Heart left ventricle (tissue), 16 donors: ENCODE measurements at regions of chr17 and their contacts with region 1.

Region 1: GRCh38 chr17:17966399-17966798 is 5.8 kb downstream of the TOM1L2 start:
- DNase-seq: no peak
- ATAC-seq: no peak
- H3K4me3 ChIP-seq: no peak overlapping the region
- H3K27ac ChIP-seq: no peak overlapping the region
- H3K4me1 ChIP-seq: peaks cover 6 to 70% (median 42%) of the 10 kb centered on the region in 12 donors
- H3K27me3 ChIP-seq: no peaks in the 10 kb centered on the region
- CTCF ChIP-seq: no peak
- POLR2A ChIP-seq: no peak

Region 2: DNA sequence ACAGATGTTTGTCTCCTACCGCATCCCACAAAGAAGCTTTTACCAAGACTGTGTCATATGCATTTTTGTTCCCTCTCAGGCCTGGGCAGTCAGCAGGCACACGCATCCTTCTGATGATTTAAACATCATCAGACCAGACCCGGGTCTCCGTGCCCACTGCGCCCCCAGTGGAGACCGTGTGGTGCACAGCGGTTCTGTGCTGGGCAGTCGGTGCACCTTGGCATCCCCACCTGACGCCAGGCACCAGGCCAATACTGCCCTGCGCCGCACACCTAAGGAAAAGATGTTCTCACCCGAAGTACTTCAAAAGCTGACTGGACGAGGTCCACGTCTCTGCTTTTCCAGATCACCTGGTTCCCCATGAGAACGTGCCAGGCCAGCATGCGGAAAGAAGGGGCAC is 749.6 kb before region 1 on chr17:
- intact Hi-C with region 1: no loop called
- DNase-seq: peak in 1 of 5 donors; percentile 11
- ATAC-seq: no peak
- H3K4me3 ChIP-seq: no peak overlapping the region
- H3K27ac ChIP-seq: no peak overlapping the region
- H3K4me1 ChIP-seq: peaks cover 0 to 2% (median 0%) of the 10 kb centered on the region in 12 donors
- H3K27me3 ChIP-seq: no peaks in the 10 kb centered on the region
- CTCF ChIP-seq: no peak
- POLR2A ChIP-seq: no peak

Region 3: GRCh38 chr17:17928398-17929287 is 37.8 kb before region 1 on chr17:
- intact Hi-C with region 1: loop called in 8 of 10 experiments (anchors 2 to 5 kb)
- DNase-seq: no peak
- ATAC-seq: peak; percentile 32 to 79 (median 50)
- H3K4me3 ChIP-seq: no peak overlapping the region
- H3K27ac ChIP-seq: peak overlapping the region in 11 of 12 donors; percentile 41 to 82 (median 69)
- H3K4me1 ChIP-seq: peaks cover 3 to 88% (median 42%) of the 10 kb centered on the region in 12 donors
- H3K27me3 ChIP-seq: no peaks in the 10 kb centered on the region
- CTCF ChIP-seq: no peak
- POLR2A ChIP-seq: no peak

Region 4: GRCh38 chr17:17933775-17934174 is 32.6 kb before region 1 on chr17:
- intact Hi-C with region 1: loop called in 3 of 10 experiments (anchors 5 kb)
- DNase-seq: no peak
- ATAC-seq: no peak
- H3K4me3 ChIP-seq: no peak overlapping the region
- H3K27ac ChIP-seq: peak overlapping the region in 2 of 12 donors; percentile 8 to 11
- H3K4me1 ChIP-seq: peaks cover 3 to 89% (median 61%) of the 10 kb centered on the region in 12 donors
- H3K27me3 ChIP-seq: no peaks in the 10 kb centered on the region
- CTCF ChIP-seq: no peak
- POLR2A ChIP-seq: no peak